CD4-positive, alpha-beta memory T cell (primary cell): ENCODE measurements at regions of chr2 and their contacts with region 1.

Region 1: DNA sequence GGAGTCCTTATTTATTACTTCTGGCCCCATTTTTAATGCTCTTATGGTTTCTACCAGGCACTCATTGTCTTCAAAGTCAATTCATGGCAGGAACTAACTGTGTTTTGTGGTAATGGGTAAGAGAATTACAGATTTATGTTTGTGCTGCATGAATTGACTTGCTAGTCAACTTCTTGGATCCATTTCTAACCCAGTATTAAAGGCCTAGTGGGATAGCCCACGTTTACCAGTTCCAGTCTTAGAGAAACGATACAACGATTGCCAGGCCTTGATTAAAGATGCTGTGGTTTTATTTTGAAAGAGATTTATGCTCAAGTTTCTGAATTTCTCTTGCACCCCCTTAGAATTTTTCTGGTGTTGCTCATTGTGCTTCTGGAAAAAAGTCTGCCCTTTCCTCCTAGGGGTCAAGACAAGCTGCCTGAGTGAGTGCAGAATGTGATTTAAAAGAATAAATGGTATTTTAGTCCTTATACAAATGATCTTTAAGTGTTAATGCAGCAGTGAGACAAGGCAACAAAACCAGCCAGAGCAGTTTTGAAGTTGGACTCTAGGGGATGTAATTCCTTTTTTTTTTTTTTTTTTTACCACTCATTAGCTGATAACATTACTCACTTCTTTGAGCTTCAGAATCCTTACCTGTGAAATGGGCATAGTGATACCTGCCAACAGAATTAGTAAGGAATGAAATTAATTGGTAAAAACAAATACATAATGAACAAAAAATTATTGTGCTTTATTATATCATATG is 101.5 kb downstream of the ARHGAP15 start:
- DNase-seq: no peak
- H3K4me3 ChIP-seq: no peak overlapping the region
- H3K4me3 Mint-ChIP-seq: peak overlapping the region in 2 of 8 donors; percentile 54 to 58
- H3K27ac ChIP-seq: no peak overlapping the region
- H3K27ac Mint-ChIP-seq: peak overlapping the region in 2 of 7 donors; percentile 13 to 72
- H3K4me1 ChIP-seq: peaks cover 26% of the 10 kb centered on the region
- H3K4me1 Mint-ChIP-seq: peaks cover 19 to 46% (median 25%) of the 10 kb centered on the region in 4 donors
- H3K27me3 ChIP-seq: no peaks in the 10 kb centered on the region
- H3K27me3 Mint-ChIP-seq: no peaks in the 10 kb centered on the region

Region 2: DNA sequence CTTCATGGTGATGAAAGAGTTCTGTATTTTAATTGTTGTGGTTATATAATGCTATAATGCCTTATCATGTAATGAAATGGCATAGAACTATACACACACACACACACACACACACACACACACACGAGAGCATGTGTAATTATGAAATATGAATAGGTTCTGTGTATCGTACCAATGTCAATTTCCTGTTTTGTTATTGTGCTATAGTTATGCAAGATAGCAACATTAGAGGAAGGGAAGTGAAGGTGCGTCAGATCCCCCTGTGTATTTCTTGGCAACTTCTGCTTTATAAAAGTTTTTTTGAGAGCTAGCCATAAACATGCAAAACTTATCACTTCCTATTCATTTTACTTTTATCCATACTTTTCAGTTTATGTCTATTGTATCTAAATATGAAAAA is 162.2 kb before region 1 on chr2:
- CTCF ChIA-PET with region 1: no interaction called
- POLR2A ChIA-PET with region 1: no interaction called
- intact Hi-C with region 1: no loop called
- DNase-seq: peak in 2 of 5 donors; percentile 4 to 7
- H3K4me3 ChIP-seq: no peak overlapping the region
- H3K4me3 Mint-ChIP-seq: no peak overlapping the region
- H3K27ac ChIP-seq: no peak overlapping the region
- H3K27ac Mint-ChIP-seq: no peak overlapping the region
- H3K4me1 ChIP-seq: no peaks in the 10 kb centered on the region
- H3K4me1 Mint-ChIP-seq: peaks cover 0 to 5% (median 2%) of the 10 kb centered on the region in 4 donors
- H3K27me3 ChIP-seq: no peaks in the 10 kb centered on the region
- H3K27me3 Mint-ChIP-seq: peaks cover 2% of the 10 kb centered on the region in 2 donors

Region 3: DNA sequence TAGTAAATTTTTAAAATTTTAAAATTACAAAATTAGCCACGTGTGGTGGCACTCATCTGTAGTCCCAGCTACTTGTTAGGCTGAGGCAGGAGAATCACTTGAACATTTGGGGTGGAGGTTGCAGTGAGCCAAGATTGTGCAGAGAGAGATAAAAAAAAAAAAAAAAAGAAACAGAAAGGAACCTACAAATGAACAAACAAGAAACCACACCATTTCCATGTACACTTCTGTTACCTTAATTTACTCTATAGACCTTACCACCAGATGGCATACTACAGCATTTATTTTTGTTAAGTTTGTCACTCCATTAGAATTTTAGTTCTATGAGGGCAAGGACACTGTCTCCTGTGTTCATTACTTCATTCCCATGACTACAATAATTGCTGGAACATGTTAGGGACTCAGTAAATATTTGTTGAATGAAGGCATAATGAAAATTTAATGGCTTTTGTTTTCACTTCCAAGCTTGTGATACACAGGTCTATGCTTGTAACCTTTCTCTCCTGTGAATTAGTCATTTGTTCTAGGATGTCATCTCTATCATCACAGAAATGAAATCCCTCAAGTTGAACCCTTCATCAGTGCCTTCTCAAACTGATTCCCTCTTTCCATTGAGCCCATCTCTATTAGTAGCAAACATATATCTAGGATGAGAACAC is 25.4 kb before region 1 on chr2:
- CTCF ChIA-PET with region 1: interaction called, 69 read pairs
- POLR2A ChIA-PET with region 1: no interaction called
- intact Hi-C with region 1: no loop called
- DNase-seq: peak in 4 of 5 donors; percentile 54 to 60 (median 57)
- H3K4me3 ChIP-seq: no peak overlapping the region
- H3K4me3 Mint-ChIP-seq: peak overlapping the region in 4 of 8 donors; percentile 16 to 64 (median 34)
- H3K27ac ChIP-seq: no peak overlapping the region
- H3K27ac Mint-ChIP-seq: peak overlapping the region in 5 of 7 donors; percentile 39 to 77 (median 67)
- H3K4me1 ChIP-seq: peaks cover 42% of the 10 kb centered on the region
- H3K4me1 Mint-ChIP-seq: peaks cover 55 to 66% (median 57%) of the 10 kb centered on the region in 4 donors
- H3K27me3 ChIP-seq: no peaks in the 10 kb centered on the region
- H3K27me3 Mint-ChIP-seq: no peaks in the 10 kb centered on the region

Region 4: DNA sequence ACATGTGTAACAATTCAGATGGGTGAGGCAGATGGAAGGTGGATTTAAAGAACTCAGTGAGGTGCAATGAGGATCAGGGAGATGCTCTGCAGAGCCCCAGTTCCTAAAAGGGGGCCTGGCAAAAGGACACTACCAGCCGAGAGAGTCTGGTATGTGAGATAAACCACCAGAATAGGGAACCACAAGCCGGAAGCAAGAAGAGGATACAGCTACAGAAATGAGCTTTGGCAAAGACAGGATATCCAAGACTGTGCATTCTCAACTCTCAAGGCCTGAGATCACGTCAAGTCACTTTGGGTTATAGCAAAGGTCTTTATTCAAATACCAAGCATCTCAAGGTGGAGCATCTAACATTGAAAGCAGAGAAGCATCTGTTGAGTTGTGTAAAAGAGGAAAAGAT is 192.0 kb after region 1 on chr2:
- CTCF ChIA-PET with region 1: no interaction called
- POLR2A ChIA-PET with region 1: no interaction called
- intact Hi-C with region 1: no loop called
- DNase-seq: peak in 2 of 5 donors; percentile 13 to 19
- H3K4me3 ChIP-seq: no peak overlapping the region
- H3K4me3 Mint-ChIP-seq: peak overlapping the region in 5 of 8 donors; percentile 0 to 42 (median 7)
- H3K27ac ChIP-seq: no peak overlapping the region
- H3K27ac Mint-ChIP-seq: peak overlapping the region in 4 of 7 donors; percentile 1 to 67 (median 23)
- H3K4me1 ChIP-seq: peaks cover 51% of the 10 kb centered on the region
- H3K4me1 Mint-ChIP-seq: peaks cover 61 to 83% (median 73%) of the 10 kb centered on the region in 4 donors
- H3K27me3 ChIP-seq: no peaks in the 10 kb centered on the region
- H3K27me3 Mint-ChIP-seq: no peaks in the 10 kb centered on the region